ENCODE measurements at regions of chrX and their contacts with region 1.

Region 1: DNA sequence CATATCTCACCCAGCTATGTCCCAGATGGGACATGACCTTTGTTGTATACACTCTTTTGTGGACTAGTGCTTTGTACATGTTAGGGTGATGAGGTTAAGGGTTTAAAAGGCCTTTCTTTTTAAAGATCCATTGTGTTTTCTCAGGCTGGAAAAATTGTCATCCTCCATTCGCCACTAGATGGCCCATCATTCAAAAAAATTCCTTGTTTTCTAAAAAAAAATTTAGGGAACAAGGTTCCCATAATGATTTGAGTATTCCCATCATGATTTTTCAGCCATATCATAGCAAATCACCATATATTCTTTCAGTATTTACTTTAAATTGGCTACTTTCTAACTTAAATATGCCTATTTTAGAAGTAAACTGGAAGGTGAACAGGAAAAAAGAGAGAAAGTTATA is 91.9 kb upstream of the TMEM164 start:
- DNase-seq: no peak
- ATAC-seq: no peak
- H3K4me3 ChIP-seq: no peak overlapping the region
- H3K27ac ChIP-seq: no peak overlapping the region
- H3K4me1 ChIP-seq: no peaks in the 10 kb centered on the region
- H3K27me3 ChIP-seq: no peaks in the 10 kb centered on the region
- CTCF ChIP-seq: peak; percentile 35 to 51 (median 39); a peak in 5 of 6 replicates
- POLR2A ChIP-seq: no peak
- RAD21 ChIP-seq: peak; percentile 50

Region 2: DNA sequence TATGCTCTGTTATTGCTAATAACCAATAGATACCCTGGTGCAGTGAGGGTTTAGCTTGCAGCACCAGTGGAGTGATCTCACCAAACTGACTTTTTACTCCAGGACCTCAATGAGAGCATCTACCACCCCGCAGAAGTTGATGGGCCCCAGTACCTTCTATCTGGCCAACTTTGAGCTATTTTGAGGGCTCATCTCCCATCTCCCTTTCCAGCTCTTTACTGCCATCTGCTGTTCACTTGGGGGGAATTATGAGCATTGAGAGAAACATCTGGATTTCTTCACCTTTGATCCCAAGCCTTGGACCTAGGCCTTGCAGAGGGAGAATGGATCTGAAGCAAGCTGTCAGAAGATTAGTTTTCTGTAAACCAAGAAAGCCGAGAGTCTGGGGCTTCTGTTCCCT is 235.5 kb after region 1 on chrX:
- CTCF ChIA-PET with region 1: interaction called, 7 read pairs
- POLR2A ChIA-PET with region 1: no interaction called
- RAD21 ChIA-PET with region 1: no interaction called
- intact Hi-C with region 1: loop called (anchors 2 kb)
- DNase-seq: peak; percentile 8
- ATAC-seq: peak; percentile 78
- H3K4me3 ChIP-seq: no peak overlapping the region
- H3K27ac ChIP-seq: no peak overlapping the region
- H3K4me1 ChIP-seq: no peaks in the 10 kb centered on the region
- H3K27me3 ChIP-seq: no peaks in the 10 kb centered on the region
- CTCF ChIP-seq: peak; percentile 51 to 60 (median 60); a peak in 5 of 6 replicates
- POLR2A ChIP-seq: no peak
- RAD21 ChIP-seq: peak; percentile 58

Region 3: DNA sequence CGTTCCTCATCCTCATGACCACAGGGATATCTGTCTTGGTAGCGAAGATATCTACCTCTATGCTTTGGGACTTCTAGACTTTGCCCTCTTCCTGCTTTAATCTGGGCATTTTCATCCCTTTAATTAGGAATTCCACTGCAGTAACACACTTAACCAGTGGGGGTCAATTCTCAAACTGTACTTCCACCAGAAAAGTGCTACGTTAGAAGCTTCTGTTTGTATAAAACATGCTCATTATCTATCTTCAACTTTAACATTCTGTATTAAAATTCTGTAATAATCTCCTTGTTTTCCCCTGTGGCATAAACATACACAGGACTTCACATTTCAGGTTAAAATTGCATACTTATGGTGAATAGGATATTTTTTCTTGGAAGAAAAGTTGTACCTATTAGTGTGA is 301.2 kb after region 1 on chrX:
- CTCF ChIA-PET with region 1: no interaction called
- POLR2A ChIA-PET with region 1: no interaction called
- RAD21 ChIA-PET with region 1: no interaction called
- intact Hi-C with region 1: no loop called
- DNase-seq: no peak
- ATAC-seq: no peak
- H3K4me3 ChIP-seq: no peak overlapping the region
- H3K27ac ChIP-seq: no peak overlapping the region
- H3K4me1 ChIP-seq: peaks cover 17 to 49% of the 10 kb centered on the region in 2 experiments
- H3K27me3 ChIP-seq: no peaks in the 10 kb centered on the region
- CTCF ChIP-seq: peak in 2 of 3 experiments; percentile 28 to 42; a peak in 3 of 6 replicates
- POLR2A ChIP-seq: no peak
- RAD21 ChIP-seq: no peak

Region 4: DNA sequence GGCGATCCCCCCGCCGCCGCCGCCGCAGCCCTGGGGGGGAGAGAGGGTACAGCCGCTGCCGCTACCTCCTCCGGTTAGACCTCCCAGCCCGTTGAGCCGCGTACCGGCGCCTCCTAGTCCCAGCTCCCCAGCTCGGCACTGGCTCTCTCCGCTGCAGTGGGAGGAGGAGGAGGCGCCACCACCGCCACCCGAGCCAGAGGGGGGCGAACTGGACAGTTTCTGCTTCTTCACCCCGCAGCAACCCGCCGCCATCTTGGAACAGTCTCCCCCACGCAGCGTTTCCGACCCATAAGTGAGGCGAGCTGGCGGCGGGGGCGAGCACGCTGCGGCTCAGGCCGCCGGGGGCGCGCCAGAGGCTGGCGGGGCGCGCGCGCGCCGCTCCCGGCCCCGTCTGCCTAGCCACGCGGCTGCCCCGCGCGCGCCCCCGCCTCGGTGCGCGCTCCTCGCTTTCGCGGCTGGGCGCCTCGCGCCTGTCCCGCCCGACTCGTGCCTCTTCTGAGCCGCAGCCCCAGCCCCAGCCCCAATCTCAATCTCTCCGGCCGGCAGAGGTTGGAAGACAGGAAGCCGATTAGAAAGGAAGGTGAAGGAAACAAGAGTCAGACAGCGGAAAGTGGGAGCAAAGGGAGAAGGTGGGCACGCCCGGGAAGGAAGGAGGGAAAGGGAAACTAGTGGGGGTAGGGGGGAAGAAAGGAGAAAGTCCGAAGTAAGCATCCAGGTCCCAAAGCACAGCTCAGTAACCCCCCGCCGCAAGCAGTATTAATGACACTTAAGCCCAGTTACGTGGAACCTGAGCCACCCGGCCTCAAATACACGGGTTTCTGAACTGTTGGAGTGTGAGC is 407.0 kb after region 1 on chrX and contains the start of gene AMMECR1:
- CTCF ChIA-PET with region 1: no interaction called
- POLR2A ChIA-PET with region 1: no interaction called
- RAD21 ChIA-PET with region 1: no interaction called
- intact Hi-C with region 1: loop called (anchors 10 kb)
- DNase-seq: peak; percentile 31
- ATAC-seq: peak; percentile 84
- H3K4me3 ChIP-seq: peak within 1 kb of the TSS; percentile 71 to 75
- H3K27ac ChIP-seq: peak within 1 kb of the TSS; percentile 63
- H3K4me1 ChIP-seq: peaks cover 0 to 14% of the 10 kb centered on the region in 2 experiments; a peak in 1 of 4 replicates
- H3K27me3 ChIP-seq: no peaks in the 10 kb centered on the region
- CTCF ChIP-seq: no peak
- POLR2A ChIP-seq: peak; percentile 45
- RAD21 ChIP-seq: no peak
- total RNA-seq, gene AMMECR1: 9.2 TPM

Region 5: DNA sequence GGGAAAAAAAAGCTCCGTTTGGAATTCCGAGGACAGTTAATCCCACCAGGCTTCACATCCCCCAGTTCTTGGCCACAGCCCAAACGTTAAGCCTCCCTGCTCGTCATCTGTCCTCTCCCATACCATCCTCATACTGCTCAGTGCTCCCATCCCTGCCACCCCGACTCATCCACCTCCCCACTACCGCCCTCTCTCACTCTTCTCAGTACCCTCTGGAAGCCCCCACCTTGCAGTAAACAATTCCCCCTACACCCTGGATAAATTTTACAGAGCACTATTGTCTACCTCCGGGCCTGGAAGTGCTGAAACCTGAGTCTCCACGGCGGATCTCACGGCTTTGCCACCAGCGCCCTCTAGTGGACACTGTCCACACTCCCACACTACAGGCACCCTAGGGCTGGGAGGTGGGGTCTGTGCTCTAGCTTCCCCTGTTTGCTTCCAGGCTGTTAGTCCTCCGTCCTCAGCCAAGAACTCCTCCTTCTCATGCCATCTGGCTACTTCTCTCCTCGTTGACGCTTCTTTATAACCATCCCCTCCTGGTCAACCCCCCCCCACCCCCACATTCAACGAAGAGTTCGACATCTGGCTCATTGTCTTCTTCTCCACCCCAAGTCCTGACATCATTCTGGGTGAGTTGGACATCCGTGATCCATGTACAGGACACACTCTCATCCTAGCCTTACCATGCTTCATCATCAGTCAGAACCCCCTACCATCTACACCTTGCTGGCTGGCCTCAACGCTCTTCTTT is 502.1 kb after region 1 on chrX:
- CTCF ChIA-PET with region 1: interaction called, 3 read pairs
- POLR2A ChIA-PET with region 1: no interaction called
- RAD21 ChIA-PET with region 1: no interaction called
- intact Hi-C with region 1: loop called (anchors 10 kb)
- DNase-seq: no peak
- ATAC-seq: peak; percentile 94
- H3K4me3 ChIP-seq: peak overlapping the region; percentile 20 to 43; a peak in 3 of 4 replicates
- H3K27ac ChIP-seq: no peak overlapping the region
- H3K4me1 ChIP-seq: peaks cover 5 to 22% of the 10 kb centered on the region in 2 experiments; a peak in 3 of 4 replicates
- H3K27me3 ChIP-seq: no peaks in the 10 kb centered on the region
- CTCF ChIP-seq: peak; percentile 52 to 79 (median 71); a peak in 5 of 6 replicates
- POLR2A ChIP-seq: no peak
- RAD21 ChIP-seq: peak; percentile 69